WTC11 (cell line): ENCODE measurements at regions of chr3 and their contacts with region 1.

Region 1: DNA sequence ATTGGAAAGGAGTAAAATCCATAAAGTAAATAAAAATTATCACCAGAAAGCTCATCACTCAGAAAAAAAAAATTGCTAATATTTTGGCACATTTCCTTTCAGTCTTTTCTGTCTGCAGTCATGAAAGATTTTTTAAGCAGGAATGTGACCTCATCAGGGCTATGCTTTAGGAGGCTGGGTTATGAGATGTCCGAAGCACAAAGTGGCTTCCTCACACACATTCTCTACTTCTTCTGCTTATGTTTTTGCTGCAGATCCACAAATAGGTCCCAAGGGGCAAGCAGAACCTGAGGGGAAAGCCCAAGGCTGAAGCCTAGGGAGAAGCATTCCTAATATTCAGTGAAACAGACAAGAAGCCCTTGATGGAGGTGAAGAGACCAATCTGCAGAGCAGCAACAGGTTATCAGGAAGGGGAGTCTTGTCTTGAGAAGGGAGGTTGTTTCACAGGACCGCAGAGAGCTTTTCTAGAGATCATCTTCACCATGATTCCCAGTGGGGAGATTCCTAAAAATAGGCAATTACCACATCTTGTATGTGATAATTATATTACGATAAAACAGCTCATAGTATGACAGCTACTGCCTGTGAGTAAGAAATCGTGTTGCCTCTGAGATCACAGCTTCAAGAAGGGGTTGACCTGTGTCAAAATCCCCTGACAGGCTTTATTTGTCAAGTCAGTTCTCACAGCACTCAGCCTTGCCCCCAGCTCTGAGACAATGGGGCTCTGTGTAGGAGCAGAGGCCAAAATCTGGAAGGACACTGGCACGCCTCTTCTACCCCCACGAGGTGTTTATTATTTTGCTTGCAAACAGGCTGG is 60.5 kb downstream of the IGF2BP2 start:
- DNase-seq: no peak
- ATAC-seq: no peak
- H3K4me3 Mint-ChIP-seq: no peak overlapping the region
- H3K27ac Mint-ChIP-seq: peak overlapping the region; percentile 17
- H3K4me1 Mint-ChIP-seq: peaks cover 80% of the 10 kb centered on the region
- H3K27me3 Mint-ChIP-seq: no peaks in the 10 kb centered on the region
- CTCF ChIP-seq: no peak

Region 2: GRCh38 chr3:185711255-185711870 is 53.0 kb before region 1 on chr3:
- CTCF ChIA-PET with region 1: interaction called, 10 read pairs
- POLR2A ChIA-PET with region 1: no interaction called
- DNase-seq: no peak
- ATAC-seq: peak; percentile 14
- H3K4me3 Mint-ChIP-seq: no peak overlapping the region
- H3K27ac Mint-ChIP-seq: peak overlapping the region; percentile 78
- H3K4me1 Mint-ChIP-seq: peaks cover 65% of the 10 kb centered on the region
- H3K27me3 Mint-ChIP-seq: no peaks in the 10 kb centered on the region
- CTCF ChIP-seq: no peak

Region 3: GRCh38 chr3:185739264-185739701 is 25.1 kb before region 1 on chr3:
- CTCF ChIA-PET with region 1: interaction called, 79 read pairs
- POLR2A ChIA-PET with region 1: interaction called, 6 read pairs
- DNase-seq: no peak
- ATAC-seq: peak; percentile 83
- H3K4me3 Mint-ChIP-seq: no peak overlapping the region
- H3K27ac Mint-ChIP-seq: peak overlapping the region; percentile 5; the same call in 1 of the 2 replicates
- H3K4me1 Mint-ChIP-seq: peaks cover 57% of the 10 kb centered on the region
- H3K27me3 Mint-ChIP-seq: no peaks in the 10 kb centered on the region
- CTCF ChIP-seq: no peak

Region 4: GRCh38 chr3:185781759-185782158 is 17.4 kb after region 1 on chr3:
- CTCF ChIA-PET with region 1: interaction called, 35 read pairs
- POLR2A ChIA-PET with region 1: no interaction called
- DNase-seq: no peak
- ATAC-seq: no peak
- H3K4me3 Mint-ChIP-seq: no peak overlapping the region
- H3K27ac Mint-ChIP-seq: peak overlapping the region; percentile 62; the same call in 1 of the 2 replicates
- H3K4me1 Mint-ChIP-seq: peaks cover 92% of the 10 kb centered on the region
- H3K27me3 Mint-ChIP-seq: no peaks in the 10 kb centered on the region
- CTCF ChIP-seq: no peak

Region 5: GRCh38 chr3:185813691-185814215 is 49.4 kb after region 1 on chr3:
- CTCF ChIA-PET with region 1: interaction called, 18 read pairs
- POLR2A ChIA-PET with region 1: no interaction called
- DNase-seq: peak; percentile 67
- ATAC-seq: peak; percentile 94
- H3K4me3 Mint-ChIP-seq: peak overlapping the region; percentile 51
- H3K27ac Mint-ChIP-seq: peak overlapping the region; percentile 95
- H3K4me1 Mint-ChIP-seq: peaks cover 86% of the 10 kb centered on the region
- H3K27me3 Mint-ChIP-seq: no peaks in the 10 kb centered on the region
- CTCF ChIP-seq: no peak